ENCODE measurements at regions of chr15 and their contacts with region 1.

Region 1: GRCh38 chr15:59528965-59529402 is 82.6 kb upstream of the GCNT3 start:
- DNase-seq: no peak
- ATAC-seq: peak; percentile 91
- H3K4me3 ChIP-seq: no peak overlapping the region
- H3K27ac ChIP-seq: no peak overlapping the region
- H3K4me1 ChIP-seq: no peaks in the 10 kb centered on the region; the same call in none of the 2 replicates
- H3K27me3 ChIP-seq: no peaks in the 10 kb centered on the region
- CTCF ChIP-seq: peak; percentile 73 to 89 (median 80)
- EP300 ChIP-seq: no peak
- POLR2A ChIP-seq: no peak
- RAD21 ChIP-seq: peak; percentile 96

Region 2: GRCh38 chr15:58980351-58980939 is 548.5 kb before region 1 on chr15:
- CTCF ChIA-PET with region 1: interaction called, 20 read pairs
- POLR2A ChIA-PET with region 1: no interaction called
- RAD21 ChIA-PET with region 1: interaction called, 10 read pairs
- SMC1A ChIA-PET with region 1: interaction called, 18 read pairs
- in situ Hi-C with region 1: no loop called
- intact Hi-C with region 1: no loop called
- DNase-seq: no peak
- ATAC-seq: peak; percentile 39
- H3K4me3 ChIP-seq: peak overlapping the region; percentile 37
- H3K27ac ChIP-seq: peak overlapping the region; percentile 83; the same call in 1 of the 2 replicates
- H3K4me1 ChIP-seq: peaks cover 34% of the 10 kb centered on the region
- H3K27me3 ChIP-seq: no peaks in the 10 kb centered on the region
- CTCF ChIP-seq: peak; percentile 19 to 60 (median 43); a peak in 3 of 6 replicates
- EP300 ChIP-seq: no peak
- POLR2A ChIP-seq: no peak
- RAD21 ChIP-seq: peak; percentile 67

Region 3: DNA sequence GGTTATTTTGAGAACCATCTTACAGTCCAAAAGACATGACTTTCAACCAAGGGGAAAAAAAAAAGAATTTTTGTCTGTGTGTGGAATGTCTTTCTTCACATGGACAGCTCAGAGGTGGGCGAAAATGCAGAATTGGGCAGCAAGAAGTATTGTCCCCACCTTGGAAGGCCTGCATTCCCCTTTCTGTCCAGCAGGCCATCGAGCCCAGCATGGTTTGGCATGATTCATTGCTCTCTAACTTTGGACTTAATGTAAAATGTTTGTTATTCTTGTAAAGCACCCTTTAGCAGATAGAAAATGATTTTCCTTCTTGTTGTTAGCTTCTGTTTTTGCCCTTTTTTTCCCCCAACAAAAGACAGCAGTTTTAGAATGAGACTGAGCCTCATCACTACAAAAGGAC is 168.7 kb before region 1 on chr15:
- CTCF ChIA-PET with region 1: no interaction called
- POLR2A ChIA-PET with region 1: no interaction called
- RAD21 ChIA-PET with region 1: no interaction called
- SMC1A ChIA-PET with region 1: no interaction called
- in situ Hi-C with region 1: no loop called
- intact Hi-C with region 1: no loop called
- DNase-seq: no peak
- ATAC-seq: peak; percentile 49
- H3K4me3 ChIP-seq: no peak overlapping the region
- H3K27ac ChIP-seq: peak overlapping the region; percentile 29; the same call in 1 of the 2 replicates
- H3K4me1 ChIP-seq: peaks cover 28% of the 10 kb centered on the region
- H3K27me3 ChIP-seq: no peaks in the 10 kb centered on the region
- CTCF ChIP-seq: peak in 2 of 3 experiments; percentile 33 to 43; a peak in 3 of 6 replicates
- EP300 ChIP-seq: no peak
- POLR2A ChIP-seq: no peak
- RAD21 ChIP-seq: no peak

Region 4: GRCh38 chr15:59501597-59501996 is 27.4 kb before region 1 on chr15:
- CTCF ChIA-PET with region 1: interaction called, 58 read pairs
- POLR2A ChIA-PET with region 1: no interaction called
- RAD21 ChIA-PET with region 1: interaction called, 30 read pairs
- SMC1A ChIA-PET with region 1: interaction called, 49 read pairs
- in situ Hi-C with region 1: no loop called
- intact Hi-C with region 1: loop called (anchors 1 kb)
- DNase-seq: no peak
- ATAC-seq: peak; percentile 89
- H3K4me3 ChIP-seq: no peak overlapping the region
- H3K27ac ChIP-seq: no peak overlapping the region
- H3K4me1 ChIP-seq: no peaks in the 10 kb centered on the region
- H3K27me3 ChIP-seq: no peaks in the 10 kb centered on the region
- CTCF ChIP-seq: peak; percentile 80 to 84 (median 81)
- EP300 ChIP-seq: no peak
- POLR2A ChIP-seq: no peak
- RAD21 ChIP-seq: peak; percentile 91

Region 5: DNA sequence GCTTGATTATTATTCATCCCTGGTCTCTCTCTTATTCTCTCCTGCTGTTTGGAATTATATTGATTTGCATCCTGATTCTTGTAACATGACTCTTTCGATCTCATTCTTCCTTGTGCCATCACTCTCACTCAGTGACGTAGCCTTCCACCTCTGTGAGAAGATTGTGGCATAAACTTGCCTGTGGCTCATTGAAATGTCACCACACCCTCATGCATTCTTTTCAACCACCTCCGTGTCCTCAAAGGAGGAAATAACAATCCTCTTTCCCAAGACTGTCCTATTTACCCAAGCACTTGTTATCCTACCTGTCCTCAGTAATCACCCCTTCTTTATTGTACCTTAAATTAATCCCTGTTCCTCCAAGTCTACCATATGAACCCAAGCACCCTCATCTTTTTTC is 41.4 kb after region 1 on chr15:
- CTCF ChIA-PET with region 1: interaction called, 10 read pairs
- POLR2A ChIA-PET with region 1: no interaction called
- RAD21 ChIA-PET with region 1: no interaction called
- SMC1A ChIA-PET with region 1: interaction called, 9 read pairs
- in situ Hi-C with region 1: no loop called
- intact Hi-C with region 1: no loop called
- DNase-seq: no peak
- ATAC-seq: no peak
- H3K4me3 ChIP-seq: no peak overlapping the region
- H3K27ac ChIP-seq: no peak overlapping the region
- H3K4me1 ChIP-seq: no peaks in the 10 kb centered on the region
- H3K27me3 ChIP-seq: no peaks in the 10 kb centered on the region
- CTCF ChIP-seq: no peak
- EP300 ChIP-seq: no peak
- POLR2A ChIP-seq: no peak
- RAD21 ChIP-seq: no peak

Region 6: DNA sequence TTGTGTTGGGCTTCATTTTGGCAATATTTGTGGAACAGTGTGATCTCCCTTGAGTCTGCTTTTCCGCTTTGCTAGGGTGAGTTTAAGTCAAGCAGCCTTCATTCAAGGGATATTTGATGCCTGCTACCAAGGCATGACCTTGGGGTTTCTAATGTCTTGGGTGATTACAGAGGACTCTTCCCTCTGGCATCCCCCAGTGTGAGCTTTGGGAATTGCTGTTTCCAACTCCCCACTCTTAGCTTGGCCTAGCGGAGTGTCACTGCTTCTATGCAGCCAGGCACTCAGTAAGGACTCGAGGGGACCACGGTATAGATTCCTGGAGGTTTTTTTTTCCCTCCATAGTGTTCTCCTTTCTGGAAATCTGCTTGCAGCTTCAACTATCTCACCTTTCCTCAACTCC is 103.7 kb after region 1 on chr15:
- CTCF ChIA-PET with region 1: interaction called, 71 read pairs
- POLR2A ChIA-PET with region 1: no interaction called
- RAD21 ChIA-PET with region 1: interaction called, 5 read pairs
- SMC1A ChIA-PET with region 1: interaction called, 8 read pairs
- in situ Hi-C with region 1: no loop called
- intact Hi-C with region 1: no loop called
- DNase-seq: no peak
- ATAC-seq: no peak
- H3K4me3 ChIP-seq: no peak overlapping the region
- H3K27ac ChIP-seq: no peak overlapping the region
- H3K4me1 ChIP-seq: no peaks in the 10 kb centered on the region
- H3K27me3 ChIP-seq: no peaks in the 10 kb centered on the region
- CTCF ChIP-seq: peak; percentile 9 to 23 (median 17); a peak in 2 of 6 replicates
- EP300 ChIP-seq: no peak
- POLR2A ChIP-seq: no peak
- RAD21 ChIP-seq: 0 out of 2 replicates have a peak, but pooled peaks have one; percentile 10

Region 7: DNA sequence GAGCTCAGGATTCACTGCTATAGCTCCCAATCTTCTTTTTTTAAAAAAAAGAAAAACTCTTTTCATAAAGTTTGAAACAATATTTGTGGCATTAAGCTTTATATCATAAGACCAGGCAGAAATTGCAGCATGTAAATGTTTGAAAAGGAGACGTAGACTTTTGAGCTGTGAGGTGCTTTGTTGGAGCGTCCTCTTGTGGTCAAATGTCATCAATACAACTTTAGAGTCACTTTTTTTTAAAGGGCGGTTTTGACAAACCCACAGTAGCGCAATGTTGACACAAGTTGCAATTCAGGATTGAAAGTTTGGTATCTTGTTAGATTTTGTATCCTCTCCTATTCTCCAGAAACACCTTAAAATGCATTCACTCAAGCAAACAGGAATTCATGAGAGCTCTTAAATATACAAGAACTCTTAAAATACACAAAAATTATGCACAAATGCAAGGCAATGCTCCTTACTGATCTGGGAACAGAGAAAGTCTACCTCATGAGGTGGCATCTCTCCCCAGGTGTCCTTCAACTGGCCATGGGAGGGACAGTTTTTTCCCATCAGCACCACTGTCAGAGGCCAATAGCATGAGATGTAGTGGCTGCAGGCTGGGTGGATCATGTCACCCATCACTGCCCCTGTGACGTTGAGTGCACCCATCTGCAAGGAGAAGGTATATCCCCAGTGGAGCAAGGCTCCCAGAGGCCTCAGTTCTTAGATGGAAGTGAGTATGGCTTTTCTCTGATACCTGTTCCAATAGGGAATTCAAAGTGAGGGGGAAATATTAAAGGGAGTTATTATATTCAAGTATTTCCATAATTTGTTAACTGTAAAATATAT is 798.1 kb after region 1 on chr15:
- CTCF ChIA-PET with region 1: interaction called, 12 read pairs
- POLR2A ChIA-PET with region 1: no interaction called
- RAD21 ChIA-PET with region 1: interaction called, 3 read pairs
- SMC1A ChIA-PET with region 1: interaction called, 3 read pairs
- in situ Hi-C with region 1: no loop called
- intact Hi-C with region 1: no loop called
- DNase-seq: no peak
- ATAC-seq: peak; percentile 46; the same call in 2 of the 3 replicates
- H3K4me3 ChIP-seq: no peak overlapping the region
- H3K27ac ChIP-seq: no peak overlapping the region
- H3K4me1 ChIP-seq: no peaks in the 10 kb centered on the region
- H3K27me3 ChIP-seq: peaks cover 0 to 3% of the 10 kb centered on the region in 2 experiments; a peak in 2 of 4 replicates
- CTCF ChIP-seq: peak; percentile 69 to 79 (median 78)
- EP300 ChIP-seq: no peak
- POLR2A ChIP-seq: no peak
- RAD21 ChIP-seq: peak; percentile 90